PC-9 (cell line): ENCODE measurements at regions of chr19 and their contacts with region 1.

Region 1: GRCh38 chr19:19063183-19064097 is at the start of gene SLC25A42:
- DNase-seq: peak; percentile 99 to 100
- H3K4me3 ChIP-seq: peak within 1 kb of the TSS; percentile 56
- H3K27ac ChIP-seq: no peak within 1 kb of the TSS
- H3K4me1 ChIP-seq: peaks cover 34% of the 10 kb centered on the region
- H3K27me3 ChIP-seq: no peaks in the 10 kb centered on the region
- CTCF ChIP-seq: no peak
- total RNA-seq, gene SLC25A42: 5.8 and 6.9 TPM in 2 replicates

Region 2: DNA sequence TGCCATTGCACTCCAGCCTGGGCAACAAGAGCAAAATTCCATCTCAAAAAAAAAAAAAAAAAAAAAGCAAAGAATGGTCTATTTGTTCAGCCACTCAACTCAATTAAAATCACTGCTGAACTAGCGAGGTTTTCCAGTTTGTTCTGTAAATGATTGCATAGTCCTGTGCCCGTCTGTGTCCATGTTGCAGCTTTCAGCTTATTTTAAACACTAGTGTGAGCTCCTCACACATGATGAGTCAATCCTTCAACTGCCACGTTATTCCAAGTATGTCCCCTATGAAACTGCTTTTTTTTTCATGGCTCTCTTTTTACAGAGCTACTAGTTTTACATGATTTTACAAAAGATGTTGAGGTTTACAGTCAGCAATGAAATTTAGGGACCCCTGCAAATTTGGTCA is 42.3 kb before region 1 on chr19:
- CTCF ChIA-PET with region 1: no interaction called
- POLR2A ChIA-PET with region 1: interaction called, 17 read pairs
- intact Hi-C with region 1: no loop called
- DNase-seq: no peak
- H3K4me3 ChIP-seq: no peak overlapping the region
- H3K27ac ChIP-seq: no peak overlapping the region
- H3K4me1 ChIP-seq: no peaks in the 10 kb centered on the region
- H3K27me3 ChIP-seq: no peaks in the 10 kb centered on the region
- CTCF ChIP-seq: no peak